ENCODE measurements at regions of chr10 and their contacts with region 1.

Region 1: DNA sequence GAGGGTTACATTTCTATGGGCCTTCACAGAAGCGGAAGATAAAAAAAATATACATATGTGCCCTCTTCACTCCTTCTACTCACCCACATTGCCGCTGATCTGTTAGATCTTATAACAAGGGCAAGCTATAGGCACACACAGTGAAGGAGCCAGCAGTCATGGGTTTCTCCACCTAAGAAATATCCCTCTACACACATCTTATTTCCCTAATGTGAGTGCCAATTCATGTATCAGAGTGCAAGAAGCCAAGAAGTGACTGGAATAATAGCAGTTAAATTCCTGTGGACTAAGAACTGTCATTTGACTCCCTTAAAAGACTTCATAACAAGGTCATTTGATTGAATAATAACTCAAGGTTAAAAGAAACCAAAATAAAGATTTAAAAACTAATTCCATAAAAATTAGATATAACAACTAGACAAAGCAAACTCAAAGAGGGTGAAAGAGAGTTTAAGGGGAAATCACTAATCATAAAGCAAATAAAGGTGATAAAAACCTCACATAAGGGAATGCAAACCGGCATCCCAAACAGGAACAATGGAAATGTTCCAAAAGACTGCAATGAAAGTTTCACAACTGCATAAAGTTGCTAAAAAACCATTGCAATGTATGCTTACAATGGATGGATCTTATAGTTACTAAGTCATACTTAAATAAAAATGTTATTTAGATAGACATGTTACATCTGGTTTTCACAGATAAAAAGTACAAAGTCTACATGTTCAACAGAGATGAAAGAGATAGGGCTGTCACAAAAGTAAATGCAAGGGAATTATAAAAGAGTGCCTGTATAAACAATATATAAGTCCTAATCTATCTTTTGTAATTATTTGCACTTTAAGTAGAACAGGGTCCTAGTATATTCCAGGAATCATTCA is 42.8 kb downstream of the ARHGAP21 start:
- DNase-seq: peak in 1 of 2 experiments; percentile 64
- H3K4me3 ChIP-seq: no peak overlapping the region
- H3K4me3 Mint-ChIP-seq: peak overlapping the region; percentile 58
- H3K27ac Mint-ChIP-seq: peak overlapping the region; percentile 20
- H3K4me1 ChIP-seq: peaks cover 25% of the 10 kb centered on the region
- H3K4me1 Mint-ChIP-seq: peaks cover 19% of the 10 kb centered on the region
- H3K27me3 ChIP-seq: no peaks in the 10 kb centered on the region
- H3K27me3 Mint-ChIP-seq: no peaks in the 10 kb centered on the region
- CTCF ChIP-seq: no peak

Region 2: DNA sequence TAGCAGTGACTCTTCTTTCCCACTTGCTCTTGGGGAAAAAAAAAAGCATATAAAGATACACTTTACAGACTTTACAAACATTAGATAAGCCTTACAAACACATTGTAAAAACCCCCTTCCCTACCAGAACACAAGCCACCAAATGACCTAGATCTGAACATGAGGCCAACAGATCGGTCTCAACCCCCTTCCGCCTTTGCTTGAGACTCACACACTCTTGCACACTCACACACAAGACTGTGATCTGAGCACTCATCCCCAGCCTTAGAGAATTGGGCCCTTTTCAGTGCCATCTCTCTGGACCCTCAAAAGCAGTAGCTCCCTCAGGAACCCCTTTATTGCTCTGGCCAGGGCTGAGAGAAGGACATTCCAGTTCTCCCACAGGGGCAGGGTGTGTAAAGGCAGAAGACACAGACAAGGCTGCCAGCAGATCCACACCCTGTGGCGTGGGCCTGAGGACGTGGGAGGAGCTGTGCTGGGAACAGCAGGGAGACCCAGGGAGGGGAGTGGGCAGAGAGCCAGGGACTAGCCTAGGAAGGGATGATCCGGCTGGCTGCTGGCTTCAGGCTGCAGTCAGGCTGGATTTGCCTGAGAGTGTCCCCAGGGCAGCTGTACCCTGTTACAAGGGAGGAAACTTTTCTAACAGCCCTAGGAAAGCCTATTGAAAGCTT is 265.3 kb before region 1 on chr10:
- CTCF ChIA-PET with region 1: no interaction called
- POLR2A ChIA-PET with region 1: no interaction called
- intact Hi-C with region 1: no loop called
- DNase-seq: peak; percentile 51 to 62
- H3K4me3 ChIP-seq: no peak overlapping the region
- H3K4me3 Mint-ChIP-seq: peak overlapping the region; percentile 16
- H3K27ac Mint-ChIP-seq: peak overlapping the region; percentile 63
- H3K4me1 ChIP-seq: peaks cover 44% of the 10 kb centered on the region
- H3K4me1 Mint-ChIP-seq: peaks cover 29% of the 10 kb centered on the region
- H3K27me3 ChIP-seq: no peaks in the 10 kb centered on the region
- H3K27me3 Mint-ChIP-seq: no peaks in the 10 kb centered on the region
- CTCF ChIP-seq: no peak

Region 3: DNA sequence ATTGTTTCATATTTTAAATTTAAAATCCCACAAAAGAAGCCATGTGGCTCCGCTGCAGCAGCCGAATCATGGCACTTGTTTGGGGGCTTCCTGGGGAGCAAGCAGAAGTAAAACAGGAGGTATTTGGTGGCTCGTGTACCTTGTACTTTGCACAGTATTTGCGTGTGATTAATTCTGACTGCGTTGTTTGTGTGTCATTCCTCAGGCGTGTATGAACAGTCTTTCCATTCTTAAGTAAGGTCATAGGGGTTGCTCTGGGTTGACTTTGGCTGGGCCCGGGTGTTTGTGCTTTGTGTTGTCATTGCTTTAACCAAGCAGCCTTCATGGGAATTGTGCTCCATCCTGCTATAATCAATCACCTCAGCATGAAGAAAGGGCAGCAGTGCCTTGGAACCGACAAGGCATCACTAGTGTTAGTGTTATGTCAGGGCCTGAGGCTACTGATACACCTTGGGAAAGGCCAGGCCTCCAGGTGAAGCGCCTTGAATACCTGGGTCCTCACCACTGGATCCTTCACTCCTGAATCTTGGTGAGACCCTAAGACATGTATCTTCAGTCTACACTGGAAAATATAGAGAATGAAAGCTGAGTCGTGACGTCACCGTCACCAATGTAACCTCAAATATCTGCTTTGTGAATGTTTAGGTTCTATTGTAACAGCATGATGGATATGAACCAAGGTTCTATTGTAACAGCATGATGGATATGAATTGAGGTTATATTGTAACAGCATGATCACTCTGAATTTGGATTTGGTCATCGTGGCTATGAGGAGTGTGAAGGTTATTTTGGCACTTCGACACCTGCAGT is 139.4 kb before region 1 on chr10:
- CTCF ChIA-PET with region 1: no interaction called
- POLR2A ChIA-PET with region 1: no interaction called
- intact Hi-C with region 1: loop called (anchors 1 kb)
- DNase-seq: peak; percentile 74 to 81
- H3K4me3 ChIP-seq: no peak overlapping the region
- H3K4me3 Mint-ChIP-seq: no peak overlapping the region
- H3K27ac Mint-ChIP-seq: peak overlapping the region; percentile 54
- H3K4me1 ChIP-seq: peaks cover 27% of the 10 kb centered on the region
- H3K4me1 Mint-ChIP-seq: peaks cover 6% of the 10 kb centered on the region
- H3K27me3 ChIP-seq: no peaks in the 10 kb centered on the region
- H3K27me3 Mint-ChIP-seq: no peaks in the 10 kb centered on the region
- CTCF ChIP-seq: no peak

Region 4: DNA sequence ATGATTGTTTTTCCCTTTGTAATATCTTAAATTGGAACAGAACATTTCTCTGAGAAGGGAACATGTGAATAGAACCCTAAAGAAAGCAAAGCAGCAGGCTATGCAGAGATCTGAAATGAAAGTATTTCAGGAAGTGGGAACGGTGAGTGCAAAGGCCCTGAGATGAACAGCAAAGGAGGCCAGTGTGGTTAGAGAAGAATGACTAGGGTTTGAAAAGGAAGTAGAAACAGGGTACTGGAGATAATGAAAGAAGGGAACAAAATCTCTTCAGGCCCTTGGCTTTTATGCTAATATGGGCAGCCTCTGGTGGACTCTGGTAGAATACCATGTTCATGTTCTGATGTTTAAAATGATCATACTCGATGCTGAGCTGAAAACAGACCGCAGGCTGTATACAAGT is 20.6 kb after region 1 on chr10:
- CTCF ChIA-PET with region 1: no interaction called
- POLR2A ChIA-PET with region 1: no interaction called
- intact Hi-C with region 1: loop called (anchors 1 kb)
- DNase-seq: no peak
- H3K4me3 ChIP-seq: no peak overlapping the region
- H3K4me3 Mint-ChIP-seq: no peak overlapping the region
- H3K27ac Mint-ChIP-seq: no peak overlapping the region
- H3K4me1 ChIP-seq: peaks cover 38% of the 10 kb centered on the region
- H3K4me1 Mint-ChIP-seq: peaks cover 43% of the 10 kb centered on the region
- H3K27me3 ChIP-seq: no peaks in the 10 kb centered on the region
- H3K27me3 Mint-ChIP-seq: no peaks in the 10 kb centered on the region
- CTCF ChIP-seq: peak in 1 of 2 experiments; percentile 2

Region 5: GRCh38 chr10:24724381-24725228 is 43.7 kb after region 1 on chr10:
- CTCF ChIA-PET with region 1: no interaction called
- POLR2A ChIA-PET with region 1: no interaction called
- intact Hi-C with region 1: loop called (anchors 1 kb)
- DNase-seq: peak; percentile 99 to 100
- H3K4me3 ChIP-seq: peak overlapping the region; percentile 85
- H3K4me3 Mint-ChIP-seq: no peak overlapping the region
- H3K27ac Mint-ChIP-seq: peak overlapping the region; percentile 86
- H3K4me1 ChIP-seq: peaks cover 8% of the 10 kb centered on the region
- H3K4me1 Mint-ChIP-seq: peaks cover 21% of the 10 kb centered on the region
- H3K27me3 ChIP-seq: no peaks in the 10 kb centered on the region
- H3K27me3 Mint-ChIP-seq: no peaks in the 10 kb centered on the region
- CTCF ChIP-seq: no peak

Region 6: GRCh38 chr10:24771941-24772694 is 91.2 kb after region 1 on chr10:
- CTCF ChIA-PET with region 1: no interaction called
- POLR2A ChIA-PET with region 1: no interaction called
- intact Hi-C with region 1: no loop called
- DNase-seq: no peak
- H3K4me3 ChIP-seq: no peak overlapping the region
- H3K4me3 Mint-ChIP-seq: no peak overlapping the region
- H3K27ac Mint-ChIP-seq: no peak overlapping the region
- H3K4me1 ChIP-seq: no peaks in the 10 kb centered on the region
- H3K4me1 Mint-ChIP-seq: no peaks in the 10 kb centered on the region
- H3K27me3 ChIP-seq: no peaks in the 10 kb centered on the region
- H3K27me3 Mint-ChIP-seq: no peaks in the 10 kb centered on the region
- CTCF ChIP-seq: no peak